A549 (cell line): ENCODE measurements at regions of chr2 and their contacts with region 1.

Region 1: GRCh38 chr2:230814616-230815015 is 50.1 kb upstream of the ITM2C start:
- DNase-seq: peak; percentile 33 to 45
- ATAC-seq: peak; percentile 86 to 92
- H3K4me3 ChIP-seq: no peak overlapping the region
- H3K27ac ChIP-seq: no peak overlapping the region
- H3K4me1 ChIP-seq: no peaks in the 10 kb centered on the region
- CTCF ChIP-seq: peak; percentile 46
- EP300 ChIP-seq: no peak
- POLR2A ChIP-seq: no peak
- RAD21 ChIP-seq: peak; percentile 44 to 64; a peak in 4 of 5 replicates

Region 2: GRCh38 chr2:230798769-230799399 is 15.7 kb before region 1 on chr2:
- CTCF ChIA-PET with region 1: interaction called, 10 read pairs
- POLR2A ChIA-PET with region 1: no interaction called
- DNase-seq: peak; percentile 22 to 45
- ATAC-seq: peak in 1 of 2 experiments; percentile 82; a peak in 4 of 6 replicates
- H3K4me3 ChIP-seq: no peak overlapping the region
- H3K27ac ChIP-seq: no peak overlapping the region
- H3K4me1 ChIP-seq: peaks cover 7% of the 10 kb centered on the region
- CTCF ChIP-seq: peak; percentile 84
- EP300 ChIP-seq: no peak
- POLR2A ChIP-seq: no peak
- RAD21 ChIP-seq: peak; percentile 80 to 87